ENCODE measurements at regions of chr21 and their contacts with region 1.

Region 1: DNA sequence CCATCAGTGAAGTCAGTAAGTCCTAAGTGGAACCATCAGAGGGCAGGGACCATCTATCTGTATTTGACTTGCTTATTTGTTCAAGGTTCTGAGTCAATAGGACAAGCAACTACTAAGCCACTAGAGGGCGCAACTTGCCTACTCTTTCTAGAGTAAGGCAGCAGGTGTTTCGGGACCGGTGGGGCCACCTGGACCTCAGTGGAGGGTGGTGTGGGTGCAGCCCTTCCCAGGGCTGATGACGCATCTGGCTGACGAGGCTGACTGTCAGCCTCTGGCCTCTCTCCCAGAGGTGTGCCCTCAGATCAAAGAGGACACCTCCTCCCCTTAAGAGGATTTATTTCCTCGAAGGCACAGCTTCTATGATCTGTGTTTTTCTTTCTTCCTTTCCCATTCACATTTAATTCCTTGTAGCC is 6.6 kb downstream of the CBR3 start:
- DNase-seq: peak; percentile 87 to 95 (median 91)
- H3K4me3 ChIP-seq: no peak overlapping the region
- H3K27ac ChIP-seq: no peak overlapping the region
- H3K4me1 ChIP-seq: peaks cover 0 to 4% (median 0%) of the 10 kb centered on the region in 3 donors
- H3K27me3 ChIP-seq: no peaks in the 10 kb centered on the region
- CTCF ChIP-seq: peak; percentile 83

Region 2: GRCh38 chr21:34807146-34807880 is 1334.2 kb before region 1 on chr21:
- intact Hi-C with region 1: no loop called
- DNase-seq: no peak
- H3K4me3 ChIP-seq: no peak overlapping the region
- H3K27ac ChIP-seq: no peak overlapping the region
- H3K4me1 ChIP-seq: no peaks in the 10 kb centered on the region
- H3K27me3 ChIP-seq: no peaks in the 10 kb centered on the region
- CTCF ChIP-seq: no peak

Region 3: GRCh38 chr21:36209626-36210171 is 68.2 kb after region 1 on chr21:
- intact Hi-C with region 1: loop called (anchors 10 kb)
- DNase-seq: peak in 4 of 5 donors; percentile 59 to 85 (median 68)
- H3K4me3 ChIP-seq: no peak overlapping the region
- H3K27ac ChIP-seq: no peak overlapping the region
- H3K4me1 ChIP-seq: no peaks in the 10 kb centered on the region
- H3K27me3 ChIP-seq: no peaks in the 10 kb centered on the region
- CTCF ChIP-seq: peak; percentile 53

Region 4: GRCh38 chr21:36319765-36320420 is 178.4 kb after region 1 on chr21 and contains the start of gene MORC3:
- intact Hi-C with region 1: no loop called
- DNase-seq: peak; percentile 99 to 100 (median 100)
- H3K4me3 ChIP-seq: peak within 1 kb of the TSS; percentile 69 to 94 (median 88)
- H3K27ac ChIP-seq: peak within 1 kb of the TSS; percentile 97
- H3K4me1 ChIP-seq: peaks cover 0 to 5% (median 2%) of the 10 kb centered on the region in 3 donors
- H3K27me3 ChIP-seq: no peaks in the 10 kb centered on the region
- CTCF ChIP-seq: no peak
- total RNA-seq, gene MORC3: 32.4 TPM

Measured in kidney (tissue), 22 donors.